GM10248 (cell line): ENCODE measurements at regions of chr2 and their contacts with region 1.

Region 1: DNA sequence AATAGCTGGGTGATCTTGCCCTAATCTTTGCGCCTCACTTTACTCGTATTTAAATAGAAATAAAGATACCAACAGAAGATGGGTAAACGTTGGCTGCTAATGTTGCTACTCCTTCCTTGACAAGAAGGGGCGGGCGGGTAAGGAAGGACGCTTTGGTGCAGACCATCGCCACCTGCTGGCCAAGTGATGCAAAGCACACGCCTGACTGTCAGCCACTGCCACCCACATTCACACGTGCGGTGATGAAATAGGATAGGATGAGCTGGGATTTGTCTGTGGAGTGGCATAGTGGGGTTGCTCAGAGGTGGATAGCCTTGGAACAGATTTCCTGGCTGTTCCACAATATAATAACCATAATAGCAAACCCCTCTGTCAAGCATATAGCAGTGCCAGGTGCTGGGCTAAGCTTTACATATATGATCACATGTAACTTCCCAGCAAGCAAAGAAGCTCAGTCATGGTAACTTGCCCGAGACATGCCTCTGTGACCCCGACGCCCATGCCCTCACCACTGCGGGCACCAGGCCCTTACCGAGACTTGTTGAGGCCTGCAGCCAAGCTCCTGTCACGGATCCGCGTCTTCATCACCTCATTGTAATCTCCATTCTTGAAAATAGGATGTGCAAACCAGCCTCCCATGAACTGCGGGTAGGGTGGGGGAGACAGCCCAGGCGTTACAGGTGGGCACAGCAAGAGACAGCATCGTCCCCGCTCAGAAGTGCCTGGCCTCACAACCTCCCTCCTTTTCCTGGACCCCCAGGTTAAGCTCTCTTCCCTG is 39.3 kb downstream of the LCT start:
- DNase-seq: peak; percentile 86
- CTCF ChIP-seq: peak; percentile 99

Region 2: DNA sequence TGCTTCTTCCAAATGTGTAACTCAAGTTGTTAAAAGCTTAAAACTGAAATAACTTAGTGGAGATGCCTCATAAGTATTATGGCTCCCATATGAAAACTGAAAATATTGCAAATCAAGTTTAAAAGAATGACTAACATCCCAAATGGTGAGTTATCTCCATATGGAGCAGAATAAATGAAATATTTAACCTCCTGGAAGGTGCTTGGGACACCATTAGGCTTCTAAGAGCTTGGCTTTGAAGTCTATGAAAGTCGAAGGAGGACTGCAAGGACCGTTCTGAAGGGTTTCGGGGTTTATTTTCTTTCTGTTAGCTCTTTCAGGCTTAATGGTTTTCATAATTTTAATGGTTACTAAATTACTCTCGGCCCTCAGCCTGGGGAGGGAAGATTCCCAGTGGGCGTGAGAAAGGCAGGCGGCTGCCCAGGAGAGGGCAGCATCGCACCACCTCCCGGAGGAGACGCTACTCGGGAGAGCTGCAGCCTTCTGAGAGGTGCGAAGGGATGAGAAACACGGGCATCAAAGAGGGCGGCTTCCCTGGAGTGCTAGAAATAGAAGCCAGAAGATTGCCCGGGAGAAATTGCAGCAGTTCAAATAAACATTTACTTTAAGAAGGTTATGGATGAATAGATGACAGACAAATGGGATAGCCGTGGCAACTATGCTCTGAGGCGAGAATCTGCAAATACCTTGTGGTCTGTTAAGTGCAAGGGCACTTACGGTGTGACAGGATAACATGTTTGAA is 793.5 kb before region 1 on chr2:
- CTCF ChIA-PET with region 1: interaction called, 44 read pairs
- POLR2A ChIA-PET with region 1: no interaction called
- DNase-seq: peak; percentile 82
- CTCF ChIP-seq: peak; percentile 94

Region 3: GRCh38 chr2:135773917-135774316 is 23.8 kb before region 1 on chr2:
- CTCF ChIA-PET with region 1: interaction called, 110 read pairs
- POLR2A ChIA-PET with region 1: no interaction called
- DNase-seq: no peak
- CTCF ChIP-seq: no peak

Region 4: DNA sequence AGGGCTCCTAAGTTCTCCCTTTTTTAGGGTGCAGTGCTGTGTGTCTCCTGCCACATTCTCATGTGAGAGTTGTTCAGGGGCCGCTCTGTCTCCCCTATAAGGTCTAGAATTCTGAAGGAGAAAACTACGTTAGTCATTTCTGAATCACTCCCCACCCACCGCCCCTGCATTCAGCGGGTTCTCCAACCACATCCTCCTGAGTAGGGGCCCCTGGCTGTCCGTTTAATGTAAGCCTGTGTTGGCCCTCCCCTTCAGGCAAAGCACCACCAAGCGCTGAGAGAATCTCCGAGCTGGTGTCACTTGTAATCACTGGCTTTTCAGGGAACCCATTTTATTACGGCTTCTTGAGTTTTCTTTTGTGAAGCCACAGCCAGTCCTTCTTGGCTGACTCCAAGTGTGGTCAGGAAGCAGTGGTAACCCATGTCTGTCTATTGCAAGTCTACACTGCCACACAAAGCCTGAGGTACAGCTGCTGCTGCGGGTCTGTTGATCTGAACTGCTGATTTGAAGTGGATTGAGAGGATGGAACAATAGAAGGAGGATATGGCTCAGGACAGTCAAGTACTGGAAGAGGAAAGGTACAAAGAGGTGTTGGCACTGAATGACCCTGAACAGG is 22.4 kb after region 1 on chr2:
- CTCF ChIA-PET with region 1: interaction called, 187 read pairs
- POLR2A ChIA-PET with region 1: no interaction called
- DNase-seq: peak; percentile 75
- CTCF ChIP-seq: no peak

Region 5: DNA sequence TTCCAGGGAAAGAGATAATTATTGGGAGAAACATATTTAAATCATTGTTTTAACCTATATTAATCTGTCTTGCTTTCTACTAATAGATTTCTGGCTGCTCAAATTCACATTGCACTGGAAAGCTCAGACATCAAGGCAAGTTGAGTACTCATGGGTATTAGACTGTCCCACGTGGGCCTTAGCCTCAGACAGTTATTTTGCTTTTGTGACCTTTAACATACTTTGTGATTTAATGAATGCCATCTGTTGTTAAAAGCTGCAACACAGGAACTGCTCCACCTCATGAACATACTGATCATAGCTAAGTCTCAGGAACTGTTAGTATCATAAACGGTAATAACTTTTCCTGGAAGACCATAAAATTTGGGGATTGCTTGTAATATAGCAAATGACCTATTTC is 42.0 kb after region 1 on chr2:
- CTCF ChIA-PET with region 1: interaction called, 13 read pairs
- POLR2A ChIA-PET with region 1: no interaction called
- DNase-seq: no peak
- CTCF ChIP-seq: no peak